Left ventricle myocardium inferior (tissue), 1 donor: ENCODE measurements at regions of chr2 and their contacts with region 1.

Region 1: GRCh38 chr2:172931918-172932520 is 143.6 kb upstream of the MAP3K20 start:
- DNase-seq: peak; percentile 50
- H3K4me3 ChIP-seq: peak overlapping the region; percentile 46
- H3K27ac ChIP-seq: peak overlapping the region; percentile 85
- H3K4me1 ChIP-seq: peaks cover 47% of the 10 kb centered on the region
- H3K27me3 ChIP-seq: no peaks in the 10 kb centered on the region
- CTCF ChIP-seq: peak; percentile 79

Region 2: GRCh38 chr2:172031536-172031935 is 900.5 kb before region 1 on chr2:
- intact Hi-C with region 1: no loop called
- DNase-seq: no peak
- H3K4me3 ChIP-seq: no peak overlapping the region
- H3K27ac ChIP-seq: no peak overlapping the region
- H3K4me1 ChIP-seq: no peaks in the 10 kb centered on the region
- H3K27me3 ChIP-seq: no peaks in the 10 kb centered on the region
- CTCF ChIP-seq: no peak

Region 3: GRCh38 chr2:172735582-172736423 is 196.2 kb before region 1 on chr2 and contains the start of gene RAPGEF4:
- intact Hi-C with region 1: no loop called
- DNase-seq: no peak
- H3K4me3 ChIP-seq: peak within 1 kb of the TSS; percentile 71
- H3K27ac ChIP-seq: peak within 1 kb of the TSS; percentile 34
- H3K4me1 ChIP-seq: peaks cover 30% of the 10 kb centered on the region
- H3K27me3 ChIP-seq: peaks cover 53% of the 10 kb centered on the region
- CTCF ChIP-seq: no peak
- total RNA-seq, gene RAPGEF4: 3.7 TPM

Region 4: GRCh38 chr2:172806493-172806892 is 125.5 kb before region 1 on chr2:
- intact Hi-C with region 1: loop called (anchors 2 kb)
- DNase-seq: no peak
- H3K4me3 ChIP-seq: no peak overlapping the region
- H3K27ac ChIP-seq: no peak overlapping the region
- H3K4me1 ChIP-seq: peaks cover 5% of the 10 kb centered on the region
- H3K27me3 ChIP-seq: no peaks in the 10 kb centered on the region
- CTCF ChIP-seq: peak; percentile 91

Region 5: GRCh38 chr2:172864182-172864581 is 67.8 kb before region 1 on chr2:
- intact Hi-C with region 1: loop called (anchors 2 kb)
- DNase-seq: peak; percentile 44
- H3K4me3 ChIP-seq: no peak overlapping the region
- H3K27ac ChIP-seq: no peak overlapping the region
- H3K4me1 ChIP-seq: peaks cover 57% of the 10 kb centered on the region
- H3K27me3 ChIP-seq: no peaks in the 10 kb centered on the region
- CTCF ChIP-seq: peak; percentile 76